ENCODE measurements at regions of chr17 and their contacts with region 1.

Region 1: GRCh38 chr17:5694551-5694950 is 110.2 kb upstream of the NLRP1 start:
- DNase-seq: no peak
- ATAC-seq: no peak
- H3K4me3 ChIP-seq: no peak overlapping the region
- H3K27ac ChIP-seq: no peak overlapping the region
- H3K4me1 ChIP-seq: no peaks in the 10 kb centered on the region
- H3K27me3 ChIP-seq: peaks cover 2% of the 10 kb centered on the region

Region 2: GRCh38 chr17:5630434-5630833 is 64.1 kb before region 1 on chr17:
- intact Hi-C with region 1: loop called in 1 of 4 experiments (anchors 10 kb)
- DNase-seq: no peak
- ATAC-seq: no peak
- H3K4me3 ChIP-seq: no peak overlapping the region
- H3K27ac ChIP-seq: no peak overlapping the region
- H3K4me1 ChIP-seq: no peaks in the 10 kb centered on the region
- H3K27me3 ChIP-seq: no peaks in the 10 kb centered on the region

Measured in right cardiac atrium (tissue), 5 donors.